Astrocyte of the cerebellum (primary cell): ENCODE measurements at regions of chr12 and their contacts with region 1.

Region 1: DNA sequence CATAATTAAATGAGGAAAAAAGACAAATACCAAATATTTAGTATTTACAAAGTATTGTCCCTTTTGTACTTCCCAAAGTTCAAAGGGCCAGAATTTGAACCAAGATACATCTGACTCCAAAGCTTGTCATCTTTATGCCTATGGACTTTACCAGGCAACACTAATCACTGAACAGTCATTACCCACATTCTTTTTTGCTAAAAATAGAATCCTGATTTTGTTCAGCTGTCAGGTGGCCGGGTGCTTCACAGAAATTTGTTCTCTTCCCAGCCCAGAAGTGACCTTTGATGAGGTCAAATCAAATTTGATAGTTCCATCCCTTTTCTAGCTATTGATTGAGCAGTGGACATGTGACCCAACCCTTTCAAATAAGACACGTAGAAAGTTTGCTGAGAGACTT is 121.6 kb downstream of the LLPH start:
- DNase-seq: no peak
- H3K4me3 ChIP-seq: no peak overlapping the region
- CTCF ChIP-seq: no peak

Region 2: DNA sequence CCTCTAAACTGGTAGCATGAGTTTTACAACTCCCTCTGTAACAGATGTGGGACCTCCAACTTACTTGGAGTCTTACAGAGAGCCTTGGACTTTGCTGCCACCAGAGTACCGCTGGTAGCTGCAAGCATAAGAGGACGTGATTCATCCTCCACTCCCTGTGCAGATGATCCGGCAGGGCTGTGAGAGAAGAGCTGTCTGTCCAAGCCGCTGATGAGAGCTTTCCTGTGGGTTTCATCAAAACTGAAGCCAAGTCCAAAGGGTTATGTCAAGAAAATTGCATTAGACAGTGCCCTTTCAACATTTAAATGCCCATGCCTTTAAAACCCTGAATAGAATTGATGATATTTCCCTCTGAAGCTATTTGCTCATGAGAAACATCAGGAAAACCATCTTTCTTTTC is 35.7 kb after region 1 on chr12:
- in situ Hi-C with region 1: loop called (anchors 5 kb)
- DNase-seq: no peak
- H3K4me3 ChIP-seq: no peak overlapping the region
- CTCF ChIP-seq: no peak